ENCODE measurements at regions of chr3 and their contacts with region 1.

Region 1: GRCh38 chr3:128794770-128795649 is 69.0 kb downstream of the RAB7A start:
- H3K4me3 ChIP-seq: no peak overlapping the region
- H3K27ac ChIP-seq: no peak overlapping the region
- H3K4me1 ChIP-seq: no peaks in the 10 kb centered on the region
- CTCF ChIP-seq: no peak

Region 2: GRCh38 chr3:128667641-128668040 is 127.4 kb before region 1 on chr3:
- CTCF ChIA-PET with region 1: no interaction called
- POLR2A ChIA-PET with region 1: no interaction called
- H3K4me3 ChIP-seq: no peak overlapping the region
- H3K27ac ChIP-seq: no peak overlapping the region
- H3K4me1 ChIP-seq: no peaks in the 10 kb centered on the region
- CTCF ChIP-seq: no peak

Region 3: GRCh38 chr3:128680602-128681368 is 114.2 kb before region 1 on chr3:
- CTCF ChIA-PET with region 1: interaction called, 48 read pairs
- POLR2A ChIA-PET with region 1: no interaction called
- H3K4me3 ChIP-seq: peak overlapping the region; percentile 77
- H3K27ac ChIP-seq: peak overlapping the region; percentile 61
- H3K4me1 ChIP-seq: no peaks in the 10 kb centered on the region
- CTCF ChIP-seq: peak; percentile 100

Region 4: DNA sequence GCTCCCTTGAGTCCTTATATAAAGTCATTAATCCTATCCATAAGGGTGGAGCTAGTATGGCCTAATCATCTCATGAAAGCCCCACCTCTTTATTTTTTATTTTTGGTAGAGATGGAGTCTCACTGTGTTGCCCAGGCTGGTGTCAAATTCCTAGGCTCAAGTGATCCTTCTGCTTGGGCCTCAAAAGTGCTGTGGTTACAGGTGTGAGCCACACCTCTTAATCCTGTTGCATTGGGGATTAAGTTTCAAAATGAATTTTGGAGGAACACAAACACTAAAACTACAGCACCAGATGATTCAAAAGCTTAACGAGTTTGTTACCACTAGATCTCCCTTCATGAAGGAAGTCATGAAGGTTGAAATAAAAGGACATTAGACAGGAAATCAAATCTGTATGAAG is 41.3 kb before region 1 on chr3:
- CTCF ChIA-PET with region 1: no interaction called
- POLR2A ChIA-PET with region 1: no interaction called
- H3K4me3 ChIP-seq: no peak overlapping the region
- H3K27ac ChIP-seq: no peak overlapping the region
- H3K4me1 ChIP-seq: no peaks in the 10 kb centered on the region
- CTCF ChIP-seq: no peak

Region 5: GRCh38 chr3:128780101-128780837 is 14.7 kb before region 1 on chr3:
- CTCF ChIA-PET with region 1: interaction called, 13 read pairs
- POLR2A ChIA-PET with region 1: no interaction called
- H3K4me3 ChIP-seq: no peak overlapping the region
- H3K27ac ChIP-seq: no peak overlapping the region
- H3K4me1 ChIP-seq: peaks cover 6% of the 10 kb centered on the region
- CTCF ChIP-seq: no peak

Region 6: DNA sequence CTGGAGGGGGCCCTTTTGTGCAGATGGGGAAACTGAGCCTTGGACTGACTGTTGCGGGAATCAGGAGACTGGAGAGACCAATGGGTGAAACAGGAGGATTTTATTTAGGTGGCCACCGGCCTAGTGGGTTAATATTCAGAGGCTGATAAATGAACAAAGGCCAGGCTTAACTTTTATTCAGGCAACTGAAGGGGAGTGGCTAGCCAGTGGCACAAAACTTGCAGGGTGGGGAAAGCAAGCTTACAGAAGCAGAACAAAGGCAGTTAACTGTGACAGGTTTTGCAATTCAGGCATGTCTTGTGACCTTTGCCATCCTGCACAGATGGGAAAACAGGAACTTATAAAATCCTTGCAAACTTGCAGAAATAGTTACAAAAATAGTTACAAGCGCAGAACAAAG is 59.5 kb after region 1 on chr3:
- CTCF ChIA-PET with region 1: no interaction called
- POLR2A ChIA-PET with region 1: no interaction called
- H3K4me3 ChIP-seq: no peak overlapping the region
- H3K27ac ChIP-seq: no peak overlapping the region
- H3K4me1 ChIP-seq: no peaks in the 10 kb centered on the region
- CTCF ChIP-seq: no peak

Region 7: DNA sequence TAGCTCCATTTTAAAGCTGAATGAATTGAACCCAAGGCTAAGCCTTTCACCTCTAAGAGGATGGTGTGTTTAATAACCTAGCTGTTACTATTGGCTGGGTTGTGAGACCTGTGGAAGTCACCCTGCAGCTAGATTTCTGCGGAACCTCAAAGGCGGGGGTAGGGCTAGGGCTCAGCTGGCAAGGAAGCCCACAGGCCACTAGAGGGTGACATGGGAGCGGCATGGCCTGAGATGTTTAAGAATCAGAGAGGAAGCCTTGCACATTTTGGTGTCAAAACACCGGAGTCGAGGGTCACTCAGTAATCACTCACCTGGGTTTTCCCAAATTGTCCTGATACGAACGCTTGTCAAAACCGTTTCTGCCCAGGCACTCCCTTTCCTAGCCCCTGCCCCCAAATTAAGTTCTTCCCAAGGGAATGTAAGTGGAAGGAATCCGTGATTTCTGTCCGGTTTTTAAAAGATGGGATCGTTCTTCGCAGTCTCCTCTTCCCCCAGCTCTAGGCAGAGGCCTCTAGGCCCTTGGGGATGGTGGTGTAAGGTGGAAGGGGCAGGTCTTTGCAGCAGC is 80.6 kb after region 1 on chr3:
- CTCF ChIA-PET with region 1: no interaction called
- POLR2A ChIA-PET with region 1: no interaction called
- H3K4me3 ChIP-seq: no peak overlapping the region
- H3K27ac ChIP-seq: no peak overlapping the region
- H3K4me1 ChIP-seq: no peaks in the 10 kb centered on the region
- CTCF ChIP-seq: peak; percentile 50; the same call in 1 of the 2 replicates

Measured in HEK293 (cell line).